ENCODE measurements at regions of chr12 and their contacts with region 1.

Region 1: DNA sequence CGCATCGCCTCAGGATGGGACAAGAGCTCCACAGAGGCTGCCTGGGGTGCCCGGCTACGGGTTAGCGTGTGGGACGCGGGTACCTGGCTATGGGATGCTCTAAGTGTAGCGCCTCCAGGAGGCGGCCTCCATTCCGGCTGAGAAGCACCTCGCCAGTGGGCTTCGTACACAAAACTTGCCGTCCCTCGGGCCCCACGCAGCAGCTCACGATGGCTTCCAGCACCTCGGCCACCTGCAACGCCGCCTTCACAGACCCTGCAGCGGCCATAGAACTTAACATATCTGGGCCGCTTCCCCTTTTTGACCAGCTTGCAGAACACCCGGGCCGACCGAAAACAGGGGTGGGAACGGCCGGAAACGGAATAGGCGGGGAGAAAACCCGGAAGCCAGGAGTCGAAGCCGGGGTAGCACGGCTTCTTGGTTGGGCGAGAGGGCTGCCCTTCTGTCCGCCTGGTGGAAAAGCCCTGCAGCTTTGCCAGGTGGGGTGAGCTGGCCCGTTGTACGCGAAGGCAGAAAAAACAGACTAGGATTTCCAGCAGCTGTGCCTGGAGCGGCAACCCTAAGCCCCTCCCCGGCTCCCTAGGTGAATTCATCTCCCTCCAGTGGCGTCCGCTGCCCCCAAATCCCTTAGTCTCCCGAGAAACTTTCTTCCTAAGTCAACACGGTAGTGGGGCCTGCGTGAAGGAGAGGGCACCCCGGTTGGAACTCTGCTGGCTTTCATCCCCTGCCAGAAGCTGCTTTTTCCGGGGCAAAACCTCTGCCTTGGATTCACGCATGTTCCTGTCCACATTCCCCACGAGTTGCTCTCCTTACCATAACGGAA is at the start of gene BBS10:
- ATAC-seq: peak; percentile 96 to 98 (median 97)
- H3K4me3 ChIP-seq: peak within 1 kb of the TSS; percentile 51 to 94 (median 68)
- H3K27ac ChIP-seq: peak within 1 kb of the TSS; percentile 86 to 90
- H3K4me1 ChIP-seq: peaks cover 0 to 8% of the 10 kb centered on the region in 2 donors
- total RNA-seq, gene BBS10: 8.6 to 23.5 (median 14.4) TPM

Region 2: GRCh38 chr12:75526655-75527511 is 821.4 kb before region 1 on chr12:
- in situ Hi-C with region 1: loop called in 2 of 9 experiments (anchors 25 kb)
- ATAC-seq: peak; percentile 49 to 80 (median 78)
- H3K4me3 ChIP-seq: no peak overlapping the region
- H3K27ac ChIP-seq: no peak overlapping the region
- H3K4me1 ChIP-seq: peaks cover 4 to 9% of the 10 kb centered on the region in 2 donors

Region 3: DNA sequence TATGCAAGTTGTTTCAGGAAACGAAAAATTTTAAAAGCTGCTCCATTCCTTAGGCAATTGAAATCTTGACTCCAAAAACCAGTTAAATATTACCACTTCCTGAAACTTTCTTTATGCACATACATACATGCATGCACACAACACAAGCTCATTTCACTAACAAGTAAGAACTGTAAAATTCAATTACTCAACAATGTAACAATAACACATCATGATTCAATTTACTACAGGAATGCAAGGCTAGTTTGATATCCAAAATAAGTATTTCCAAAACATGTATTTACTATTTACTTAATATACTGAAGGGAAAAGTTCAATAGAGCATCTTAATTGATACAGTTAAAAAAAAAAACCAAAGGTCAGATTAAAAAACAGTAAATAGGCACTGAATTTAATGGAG is 283.4 kb before region 1 on chr12:
- in situ Hi-C with region 1: loop called in 2 of 9 experiments (anchors 10 to 25 kb)
- ATAC-seq: peak in 1 of 8 experiments; percentile 43
- H3K4me3 ChIP-seq: no peak overlapping the region
- H3K27ac ChIP-seq: no peak overlapping the region
- H3K4me1 ChIP-seq: no peaks in the 10 kb centered on the region

Region 4: GRCh38 chr12:76074701-76075336 is 273.5 kb before region 1 on chr12:
- in situ Hi-C with region 1: loop called in 2 of 9 experiments (anchors 25 kb)
- ATAC-seq: peak in 1 of 8 experiments; percentile 35
- H3K4me3 ChIP-seq: no peak overlapping the region
- H3K27ac ChIP-seq: no peak overlapping the region
- H3K4me1 ChIP-seq: no peaks in the 10 kb centered on the region

Region 5: GRCh38 chr12:76083904-76084862 is 264.1 kb before region 1 on chr12 and contains the start of gene NAP1L1:
- in situ Hi-C with region 1: loop called in 1 of 9 experiments (anchors 25 kb)
- ATAC-seq: peak; percentile 84 to 93 (median 90)
- H3K4me3 ChIP-seq: peak within 1 kb of the TSS; percentile 49 to 90 (median 70)
- H3K27ac ChIP-seq: peak within 1 kb of the TSS; percentile 96
- H3K4me1 ChIP-seq: peaks cover 9 to 24% of the 10 kb centered on the region in 2 donors
- total RNA-seq, gene NAP1L1: 293 to 577 (median 414) TPM

Region 6: GRCh38 chr12:76183459-76184186 is 164.7 kb before region 1 on chr12:
- in situ Hi-C with region 1: loop called in 1 of 9 experiments (anchors 25 kb)
- ATAC-seq: peak in 5 of 8 experiments; percentile 27 to 96 (median 67)
- H3K4me3 ChIP-seq: no peak overlapping the region
- H3K27ac ChIP-seq: no peak overlapping the region
- H3K4me1 ChIP-seq: no peaks in the 10 kb centered on the region

Measured in motor neuron (in vitro differentiated cells).